Kidney (tissue), 22 donors: ENCODE measurements at regions of chr4 and their contacts with region 1.

Region 1: DNA sequence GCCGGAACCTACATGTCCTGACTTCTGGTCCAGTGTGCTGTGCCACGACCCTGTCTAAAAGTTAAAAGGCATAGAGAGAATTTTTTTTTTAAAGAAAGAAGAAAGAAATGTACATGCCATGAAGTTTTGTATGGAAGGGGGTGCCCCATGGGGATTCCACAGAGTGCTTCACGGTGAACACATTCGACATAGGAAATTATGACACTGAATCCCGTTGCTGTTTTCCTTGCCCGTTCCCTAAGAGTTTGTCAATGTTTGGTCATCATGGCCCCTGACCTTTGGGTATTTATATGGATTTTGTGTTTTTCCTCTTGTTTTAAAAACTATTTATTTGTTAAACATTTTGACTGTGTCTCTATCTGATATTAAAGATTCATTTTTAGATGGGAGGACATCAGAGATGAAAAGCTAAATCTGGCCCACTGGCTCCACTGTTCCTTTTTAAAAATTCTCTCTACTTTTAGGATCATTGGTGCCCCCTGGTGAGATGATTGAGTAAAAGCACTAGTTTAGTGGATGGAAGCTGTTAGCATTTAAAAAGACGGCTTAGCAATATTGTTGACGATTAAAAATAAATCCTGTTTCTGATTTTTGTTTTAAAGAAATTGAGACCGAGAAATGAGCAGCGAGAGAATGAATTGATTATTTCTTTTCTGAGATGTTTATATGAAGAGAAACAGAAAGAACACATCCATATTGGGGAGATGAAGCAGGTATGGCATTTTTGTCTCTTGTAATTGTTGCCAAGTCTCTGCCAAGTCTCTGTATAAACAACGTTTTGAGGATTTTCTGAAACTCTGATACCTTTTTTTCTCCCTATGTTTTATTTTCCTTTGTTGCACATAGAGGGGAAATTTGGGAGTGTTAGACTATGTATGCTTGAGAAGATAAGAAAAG is 75.0 kb downstream of the PTTG2 start:
- DNase-seq: peak in 2 of 5 donors; percentile 74 to 89
- H3K4me3 ChIP-seq: no peak overlapping the region
- H3K27ac ChIP-seq: no peak overlapping the region
- H3K4me1 ChIP-seq: peaks cover 0 to 8% (median 2%) of the 10 kb centered on the region in 3 donors
- H3K27me3 ChIP-seq: no peaks in the 10 kb centered on the region
- CTCF ChIP-seq: peak; percentile 65

Region 2: GRCh38 chr4:37802068-37802666 is 233.1 kb before region 1 on chr4:
- intact Hi-C with region 1: loop called (anchors 10 kb)
- DNase-seq: peak in 4 of 5 donors; percentile 75 to 94 (median 80)
- H3K4me3 ChIP-seq: no peak overlapping the region
- H3K27ac ChIP-seq: no peak overlapping the region
- H3K4me1 ChIP-seq: no peaks in the 10 kb centered on the region
- H3K27me3 ChIP-seq: no peaks in the 10 kb centered on the region
- CTCF ChIP-seq: peak; percentile 87